Activated CD4-positive, alpha-beta T cell treated with anti-CD3 and anti-CD28 coated beads for 36 hours (primary cell): ENCODE measurements at regions of chr6 and their contacts with region 1.

Region 1: GRCh38 chr6:147194652-147195411 is 9.4 kb upstream of the STXBP5 start:
- DNase-seq: no peak
- ATAC-seq: peak; percentile 86
- H3K4me3 Mint-ChIP-seq: no peak overlapping the region
- H3K27ac Mint-ChIP-seq: peak overlapping the region; percentile 84
- H3K4me1 Mint-ChIP-seq: peaks cover 20% of the 10 kb centered on the region
- H3K27me3 Mint-ChIP-seq: no peaks in the 10 kb centered on the region

Region 2: DNA sequence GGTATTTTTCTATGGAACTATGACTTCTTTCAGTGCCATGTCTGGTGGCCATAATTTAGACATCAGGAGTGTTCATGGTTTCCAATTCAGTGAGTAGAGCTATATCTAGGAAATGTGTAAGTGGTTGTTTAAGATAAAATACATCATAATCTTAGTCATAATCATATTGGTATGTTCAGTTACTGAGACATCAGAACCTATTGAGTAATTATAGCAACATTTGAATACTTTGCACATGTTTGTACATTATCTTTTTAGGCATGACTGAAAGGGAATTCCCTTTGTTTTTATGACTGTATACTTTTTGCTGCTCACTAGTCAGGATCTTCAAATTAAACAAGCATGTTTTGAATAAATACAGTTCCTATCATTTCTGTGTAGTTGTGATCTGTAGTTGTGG is 73.4 kb after region 1 on chr6:
- CTCF ChIA-PET with region 1: no interaction called
- POLR2A ChIA-PET with region 1: no interaction called
- intact Hi-C with region 1: loop called in 1 of 2 experiments (anchors 1 kb)
- DNase-seq: no peak
- ATAC-seq: peak; percentile 92
- H3K4me3 Mint-ChIP-seq: no peak overlapping the region
- H3K27ac Mint-ChIP-seq: peak overlapping the region; percentile 79
- H3K4me1 Mint-ChIP-seq: peaks cover 17% of the 10 kb centered on the region
- H3K27me3 Mint-ChIP-seq: no peaks in the 10 kb centered on the region

Region 3: DNA sequence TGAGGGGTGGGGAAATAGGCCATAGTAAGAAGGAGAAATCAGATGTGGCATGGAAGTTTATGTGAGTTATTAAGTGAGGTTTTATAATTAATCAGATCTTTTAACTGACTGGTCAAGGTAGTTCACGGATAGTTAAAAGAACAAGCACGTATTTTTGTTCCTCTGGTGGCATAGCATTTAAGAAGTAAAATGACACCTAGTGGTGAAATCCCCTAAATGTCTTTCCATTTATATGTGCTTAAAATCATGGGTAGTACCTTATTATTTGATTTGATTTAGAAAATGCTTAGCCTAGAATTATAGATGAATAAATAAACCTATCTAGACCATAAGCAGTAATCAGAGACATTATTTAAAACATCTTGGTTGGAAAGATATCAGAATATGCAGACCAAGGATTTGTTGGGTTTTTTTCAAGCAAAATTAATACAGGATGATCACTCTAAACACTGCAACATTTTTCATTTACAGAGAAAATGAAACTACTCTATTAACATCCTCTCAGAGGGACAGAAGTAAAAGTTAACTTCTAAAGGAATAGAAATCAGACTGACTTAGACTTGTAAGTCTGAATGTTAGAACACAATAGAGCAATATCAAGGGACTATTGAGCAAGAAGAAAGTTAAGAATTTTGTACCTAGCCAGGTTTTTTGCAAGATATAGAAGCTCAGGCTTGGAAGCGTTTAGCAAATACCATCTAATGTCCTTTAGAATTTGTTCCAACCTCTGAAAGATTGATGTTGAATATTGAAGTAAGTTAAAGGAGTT is 90.4 kb after region 1 on chr6:
- CTCF ChIA-PET with region 1: interaction called, 4 read pairs
- POLR2A ChIA-PET with region 1: no interaction called
- intact Hi-C with region 1: loop called in 1 of 2 experiments (anchors 1 kb)
- DNase-seq: no peak
- ATAC-seq: peak; percentile 33
- H3K4me3 Mint-ChIP-seq: no peak overlapping the region
- H3K27ac Mint-ChIP-seq: peak overlapping the region; percentile 7
- H3K4me1 Mint-ChIP-seq: peaks cover 38% of the 10 kb centered on the region
- H3K27me3 Mint-ChIP-seq: no peaks in the 10 kb centered on the region

Region 4: GRCh38 chr6:147322299-147323162 is 127.7 kb after region 1 on chr6:
- CTCF ChIA-PET with region 1: no interaction called
- POLR2A ChIA-PET with region 1: no interaction called
- intact Hi-C with region 1: loop called in 1 of 2 experiments (anchors 5 kb)
- DNase-seq: peak; percentile 32
- ATAC-seq: peak; percentile 94
- H3K4me3 Mint-ChIP-seq: peak overlapping the region; percentile 51
- H3K27ac Mint-ChIP-seq: peak overlapping the region; percentile 91
- H3K4me1 Mint-ChIP-seq: peaks cover 19% of the 10 kb centered on the region
- H3K27me3 Mint-ChIP-seq: no peaks in the 10 kb centered on the region